Activated T-helper 1 cell treated with anti-CD3 and anti-CD28 coated beads, Interleukin-12 subunit alpha, Interleukin-12 subunit beta, Interleukin-2, Interleukin-4 antibody, amounts not matched to agents 30 ng/mL and 10 ng/mL and 1 ng/mL, durations not matched to agents 14 hours and 24 hours and 36 hours (primary cell): ENCODE measurements at regions of chr21 and their contacts with region 1.

Region 1: GRCh38 chr21:44011980-44012527 is at the start of gene TRAPPC10:
- DNase-seq: peak; percentile 85
- H3K4me3 Mint-ChIP-seq: peak within 1 kb of the TSS; percentile 91
- H3K27ac Mint-ChIP-seq: peak within 1 kb of the TSS; percentile 94
- H3K4me1 Mint-ChIP-seq: peaks cover 47% of the 10 kb centered on the region
- H3K27me3 Mint-ChIP-seq: no peaks in the 10 kb centered on the region
- total RNA-seq, gene TRAPPC10: 85.5 and 95.3 TPM in 2 replicates

Region 2: DNA sequence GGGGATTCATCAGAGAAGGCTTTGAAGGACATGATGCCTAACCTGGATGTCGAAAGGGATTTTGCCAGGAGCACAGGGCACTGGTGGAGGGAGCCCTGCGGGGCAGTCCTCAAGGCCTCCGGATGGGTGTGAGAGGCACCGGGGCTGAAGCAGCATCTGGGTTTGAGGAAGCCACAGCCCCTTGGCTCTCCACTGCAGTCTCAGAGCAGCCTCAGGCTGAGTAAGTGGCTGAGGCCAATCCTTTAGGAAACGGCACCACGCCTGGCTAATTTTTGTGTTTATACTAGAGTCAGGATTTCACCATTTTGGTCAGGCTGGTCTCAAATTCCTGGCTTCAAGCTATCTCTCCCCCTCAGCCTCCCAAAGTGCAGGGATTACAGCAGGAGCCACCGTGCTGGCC is 1098.6 kb before region 1 on chr21:
- intact Hi-C with region 1: no loop called
- DNase-seq: no peak
- H3K4me3 Mint-ChIP-seq: no peak overlapping the region
- H3K27ac Mint-ChIP-seq: no peak overlapping the region
- H3K4me1 Mint-ChIP-seq: no peaks in the 10 kb centered on the region
- H3K27me3 Mint-ChIP-seq: no peaks in the 10 kb centered on the region

Region 3: GRCh38 chr21:43728467-43729390 is 283.3 kb before region 1 on chr21:
- intact Hi-C with region 1: loop called (anchors 5 kb)
- DNase-seq: peak; percentile 72
- H3K4me3 Mint-ChIP-seq: peak overlapping the region; percentile 80
- H3K27ac Mint-ChIP-seq: peak overlapping the region; percentile 87
- H3K4me1 Mint-ChIP-seq: peaks cover 50% of the 10 kb centered on the region
- H3K27me3 Mint-ChIP-seq: no peaks in the 10 kb centered on the region

Region 4: GRCh38 chr21:43956670-43957035 is 55.4 kb before region 1 on chr21:
- intact Hi-C with region 1: no loop called
- DNase-seq: no peak
- H3K4me3 Mint-ChIP-seq: no peak overlapping the region
- H3K27ac Mint-ChIP-seq: no peak overlapping the region
- H3K4me1 Mint-ChIP-seq: peaks cover 13% of the 10 kb centered on the region
- H3K27me3 Mint-ChIP-seq: no peaks in the 10 kb centered on the region

Region 5: DNA sequence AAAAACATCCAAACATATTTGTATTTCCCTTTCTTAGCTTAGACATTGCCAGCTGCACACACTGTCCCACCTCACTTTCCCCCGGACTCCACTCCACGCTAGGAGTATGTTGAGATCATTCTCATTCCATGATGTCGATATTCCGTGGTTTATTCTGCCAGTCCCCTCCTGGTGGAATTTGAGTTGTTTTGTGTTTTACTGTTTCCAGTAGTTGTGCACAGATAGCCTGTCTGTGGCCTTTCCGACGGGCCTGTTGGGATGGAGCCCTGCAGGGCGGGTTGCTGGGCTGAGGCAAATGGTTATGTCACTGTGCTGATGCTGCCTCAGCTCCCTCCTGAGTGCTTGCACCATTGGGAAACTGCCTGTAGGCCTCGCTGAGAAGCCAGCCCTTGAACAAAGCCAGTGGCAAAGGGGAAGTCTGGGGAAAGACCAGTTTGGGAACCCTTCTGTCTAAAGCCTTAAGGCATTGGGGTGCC is 12.9 kb after region 1 on chr21:
- intact Hi-C with region 1: loop called (anchors 1 kb)
- DNase-seq: no peak
- H3K4me3 Mint-ChIP-seq: peak overlapping the region; percentile 15
- H3K27ac Mint-ChIP-seq: peak overlapping the region; percentile 87
- H3K4me1 Mint-ChIP-seq: peaks cover 61% of the 10 kb centered on the region
- H3K27me3 Mint-ChIP-seq: no peaks in the 10 kb centered on the region

Region 6: DNA sequence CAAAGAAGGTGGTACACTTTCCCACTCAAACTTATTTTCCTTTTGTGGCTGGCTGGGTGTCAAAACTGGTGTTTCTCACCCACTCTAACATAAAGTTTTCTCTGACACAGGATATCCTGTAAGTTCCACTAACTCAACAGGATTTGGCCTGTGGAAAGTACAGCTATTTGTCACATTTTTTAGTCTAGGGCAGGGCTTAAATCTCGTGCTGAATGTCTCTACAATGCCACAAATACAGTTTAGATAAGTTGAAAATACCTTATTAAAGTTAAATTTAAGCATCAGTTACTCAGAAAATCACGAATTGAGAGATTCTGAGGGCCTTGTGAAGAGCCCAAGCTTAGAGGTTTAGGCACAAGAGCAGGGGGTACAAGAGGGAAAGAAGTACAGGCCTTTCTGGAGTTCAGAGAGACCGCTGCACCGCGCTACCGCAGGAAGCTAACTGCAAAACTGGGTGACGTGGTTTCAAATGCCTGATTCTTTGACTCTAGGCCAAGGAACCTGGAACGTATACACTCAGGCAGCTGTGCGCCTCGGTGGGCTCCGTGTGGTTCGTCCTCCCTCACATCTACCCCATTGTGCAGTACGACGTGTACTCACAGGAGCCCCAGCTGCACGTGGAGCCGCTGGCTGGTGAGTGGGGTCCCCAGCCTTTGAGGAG is 71.7 kb after region 1 on chr21:
- intact Hi-C with region 1: loop called (anchors 1 kb)
- DNase-seq: peak; percentile 71
- H3K4me3 Mint-ChIP-seq: peak overlapping the region; percentile 86
- H3K27ac Mint-ChIP-seq: peak overlapping the region; percentile 98
- H3K4me1 Mint-ChIP-seq: peaks cover 89% of the 10 kb centered on the region
- H3K27me3 Mint-ChIP-seq: no peaks in the 10 kb centered on the region

Region 7: GRCh38 chr21:44920694-44921604 is 908.9 kb after region 1 on chr21 and contains the start of gene ITGB2:
- intact Hi-C with region 1: loop called (anchors 5 kb)
- DNase-seq: peak; percentile 56
- H3K4me3 Mint-ChIP-seq: peak within 1 kb of the TSS; percentile 99
- H3K27ac Mint-ChIP-seq: peak within 1 kb of the TSS; percentile 93
- H3K4me1 Mint-ChIP-seq: peaks cover 84% of the 10 kb centered on the region
- H3K27me3 Mint-ChIP-seq: no peaks in the 10 kb centered on the region
- total RNA-seq, gene ITGB2: 292 and 294 TPM in 2 replicates